ENCODE measurements at regions of chr1 and their contacts with region 1.

Region 1: GRCh38 chr1:153796791-153797659 is 21.8 kb downstream of the SLC27A3 start:
- DNase-seq: peak; percentile 88
- ATAC-seq: peak; percentile 92
- H3K4me3 ChIP-seq: no peak overlapping the region
- H3K4me3 Mint-ChIP-seq: no peak overlapping the region
- H3K27ac ChIP-seq: no peak overlapping the region
- H3K27ac Mint-ChIP-seq: peak overlapping the region; percentile 76
- H3K4me1 ChIP-seq: peaks cover 5 to 18% of the 10 kb centered on the region in 2 donors
- H3K4me1 Mint-ChIP-seq: peaks cover 12% of the 10 kb centered on the region
- H3K27me3 ChIP-seq: no peaks in the 10 kb centered on the region
- H3K27me3 Mint-ChIP-seq: no peaks in the 10 kb centered on the region
- CTCF ChIP-seq: peak; percentile 85

Region 2: DNA sequence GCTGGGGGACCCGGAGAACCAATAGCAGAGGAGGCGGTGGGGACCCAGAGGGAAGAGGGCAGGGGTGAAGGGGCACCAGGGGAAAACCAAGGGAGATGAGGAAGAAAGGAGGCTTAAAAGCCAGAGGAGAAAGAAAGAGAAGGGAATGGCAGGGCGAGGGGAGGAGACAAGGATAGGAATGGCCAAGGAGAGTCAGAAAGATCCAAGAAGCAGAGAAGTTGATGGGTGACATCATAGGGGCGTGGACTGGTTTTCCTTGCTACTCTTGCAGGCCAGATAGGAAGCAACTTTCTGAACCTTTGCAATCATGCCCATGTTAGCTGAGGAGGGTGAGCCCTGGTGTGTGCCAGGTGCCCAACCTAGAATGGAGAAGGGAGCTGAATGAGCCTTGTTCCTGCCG is 113.2 kb before region 1 on chr1:
- CTCF ChIA-PET with region 1: no interaction called
- POLR2A ChIA-PET with region 1: no interaction called
- intact Hi-C with region 1: no loop called
- DNase-seq: no peak
- ATAC-seq: no peak
- H3K4me3 ChIP-seq: no peak overlapping the region
- H3K4me3 Mint-ChIP-seq: no peak overlapping the region
- H3K27ac ChIP-seq: no peak overlapping the region
- H3K27ac Mint-ChIP-seq: no peak overlapping the region
- H3K4me1 ChIP-seq: peaks cover 11 to 14% of the 10 kb centered on the region in 2 donors
- H3K4me1 Mint-ChIP-seq: peaks cover 15% of the 10 kb centered on the region
- H3K27me3 ChIP-seq: peaks cover 0 to 23% (median 10%) of the 10 kb centered on the region in 4 experiments
- H3K27me3 Mint-ChIP-seq: peaks cover 51% of the 10 kb centered on the region
- CTCF ChIP-seq: no peak

Region 3: DNA sequence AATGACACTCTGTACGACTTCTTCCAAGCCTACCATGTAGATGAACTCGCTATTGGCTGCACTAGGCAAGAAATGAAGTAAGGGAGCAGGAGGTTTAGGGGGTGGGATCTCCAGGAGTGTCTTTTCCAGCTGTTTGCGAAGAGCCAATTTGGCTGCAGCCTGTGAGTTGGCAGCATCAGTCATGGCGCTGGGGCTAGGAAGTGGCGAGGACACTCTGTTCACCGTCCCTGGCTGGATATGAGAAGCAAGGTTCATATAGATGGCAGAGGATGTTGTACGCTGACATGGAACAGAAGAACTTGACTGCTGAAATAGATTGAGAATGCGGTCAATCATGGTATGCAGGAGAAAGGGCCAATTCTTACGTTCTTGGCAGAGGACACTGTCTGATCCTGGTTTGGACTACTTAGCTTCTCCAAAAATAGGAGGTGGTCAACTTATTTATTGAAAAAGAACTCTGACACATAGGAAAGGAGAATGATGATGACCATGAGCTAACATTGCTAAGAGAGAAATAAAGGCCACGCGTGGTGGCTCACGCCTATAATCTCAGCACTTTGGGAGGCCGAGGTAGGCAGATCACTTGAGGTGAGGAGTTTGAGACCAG is 19.4 kb after region 1 on chr1:
- CTCF ChIA-PET with region 1: interaction called, 10 read pairs
- POLR2A ChIA-PET with region 1: no interaction called
- intact Hi-C with region 1: no loop called
- DNase-seq: no peak
- ATAC-seq: no peak
- H3K4me3 ChIP-seq: no peak overlapping the region
- H3K4me3 Mint-ChIP-seq: no peak overlapping the region
- H3K27ac ChIP-seq: no peak overlapping the region
- H3K27ac Mint-ChIP-seq: no peak overlapping the region
- H3K4me1 ChIP-seq: peaks cover 0 to 1% of the 10 kb centered on the region in 2 donors
- H3K4me1 Mint-ChIP-seq: peaks cover 3% of the 10 kb centered on the region
- H3K27me3 ChIP-seq: no peaks in the 10 kb centered on the region
- H3K27me3 Mint-ChIP-seq: no peaks in the 10 kb centered on the region
- CTCF ChIP-seq: no peak

Region 4: DNA sequence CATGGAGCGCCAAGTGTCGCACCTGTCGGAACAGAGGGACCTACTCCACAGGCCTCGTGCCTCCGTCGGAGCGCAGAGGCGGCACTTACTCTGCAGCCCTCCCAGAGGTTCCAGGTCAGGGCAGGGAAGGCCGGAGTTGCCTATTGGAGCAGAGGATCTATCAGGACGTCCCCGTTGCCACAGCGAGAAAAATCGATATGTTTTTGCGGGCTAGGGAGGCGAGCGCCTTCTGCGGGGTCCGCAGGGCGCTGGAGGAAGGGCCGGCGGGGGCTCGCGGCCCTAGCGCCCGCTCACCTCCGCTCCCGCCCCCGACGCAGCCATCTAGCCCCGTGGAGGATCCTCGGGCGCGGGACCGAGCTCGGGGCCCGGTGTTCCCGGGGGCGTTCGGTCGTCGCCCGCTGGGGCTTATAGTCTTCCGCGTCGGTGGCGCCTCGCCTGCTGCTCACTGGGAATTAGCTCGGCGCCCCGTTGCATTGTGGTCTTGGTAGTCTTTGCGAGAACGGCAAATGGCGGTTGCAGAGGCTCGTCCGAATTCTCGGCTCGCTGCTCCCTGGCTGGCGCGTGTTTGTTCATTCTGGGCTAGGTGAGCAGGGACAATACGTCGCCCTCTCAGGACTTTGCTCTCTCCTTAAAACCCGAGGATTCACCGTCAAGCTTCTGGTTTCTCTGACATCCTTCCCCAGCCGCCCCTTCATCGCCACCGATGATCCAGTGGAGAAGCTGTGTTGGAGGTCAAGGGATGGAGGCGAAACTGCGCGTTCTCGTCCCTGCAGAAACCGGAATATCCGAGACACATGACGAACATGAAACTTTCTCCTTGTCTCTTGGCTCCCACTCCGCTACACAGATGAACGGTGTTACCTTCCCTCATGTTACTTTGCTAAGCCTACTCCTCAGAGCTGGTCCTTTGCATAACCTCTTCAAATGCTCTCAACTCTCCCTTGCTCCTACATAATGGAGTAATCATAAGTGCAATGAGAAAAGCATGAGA is 180.5 kb after region 1 on chr1 and contains the start of gene JTB:
- CTCF ChIA-PET with region 1: interaction called, 12 read pairs
- POLR2A ChIA-PET with region 1: interaction called, 4 read pairs
- intact Hi-C with region 1: no loop called
- DNase-seq: peak; percentile 87
- ATAC-seq: peak; percentile 96
- H3K4me3 ChIP-seq: peak within 1 kb of the TSS; percentile 59 to 96 (median 90)
- H3K4me3 Mint-ChIP-seq: peak within 1 kb of the TSS; percentile 98
- H3K27ac ChIP-seq: peak within 1 kb of the TSS; percentile 55 to 87
- H3K27ac Mint-ChIP-seq: peak within 1 kb of the TSS; percentile 96
- H3K4me1 ChIP-seq: peaks cover 16 to 22% of the 10 kb centered on the region in 2 donors
- H3K4me1 Mint-ChIP-seq: peaks cover 34% of the 10 kb centered on the region
- H3K27me3 ChIP-seq: no peaks in the 10 kb centered on the region
- H3K27me3 Mint-ChIP-seq: no peaks in the 10 kb centered on the region
- CTCF ChIP-seq: no peak
- total RNA-seq, gene JTB: 99.1 and 106 TPM in 2 replicates

Region 5: GRCh38 chr1:154062309-154062708 is 265.3 kb after region 1 on chr1:
- CTCF ChIA-PET with region 1: no interaction called
- POLR2A ChIA-PET with region 1: no interaction called
- intact Hi-C with region 1: no loop called
- DNase-seq: no peak
- ATAC-seq: no peak
- H3K4me3 ChIP-seq: no peak overlapping the region
- H3K4me3 Mint-ChIP-seq: no peak overlapping the region
- H3K27ac ChIP-seq: no peak overlapping the region
- H3K27ac Mint-ChIP-seq: no peak overlapping the region
- H3K4me1 ChIP-seq: no peaks in the 10 kb centered on the region
- H3K4me1 Mint-ChIP-seq: no peaks in the 10 kb centered on the region
- H3K27me3 ChIP-seq: peaks cover 0 to 7% (median 4%) of the 10 kb centered on the region in 4 experiments
- H3K27me3 Mint-ChIP-seq: peaks cover 17% of the 10 kb centered on the region
- CTCF ChIP-seq: no peak

Measured in B cell (primary cell).